GM12878 (cell line): ENCODE measurements at regions of chr5 and their contacts with region 1.

Region 1: GRCh38 chr5:14258840-14259239 is 115.7 kb downstream of the TRIO start:
- DNase-seq: no peak
- ATAC-seq: peak; percentile 65
- H3K4me3 ChIP-seq: peak overlapping the region; percentile 56; the same call in 1 of the 2 replicates
- H3K27ac ChIP-seq: peak overlapping the region; percentile 14
- H3K4me1 ChIP-seq: peaks cover 37% of the 10 kb centered on the region
- H3K27me3 ChIP-seq: no peaks in the 10 kb centered on the region
- CTCF ChIP-seq: peak in 2 of 3 experiments; percentile 24 to 33; a peak in 1 of 6 replicates
- EP300 ChIP-seq: no peak
- POLR2A ChIP-seq: no peak
- RAD21 ChIP-seq: no peak

Region 2: DNA sequence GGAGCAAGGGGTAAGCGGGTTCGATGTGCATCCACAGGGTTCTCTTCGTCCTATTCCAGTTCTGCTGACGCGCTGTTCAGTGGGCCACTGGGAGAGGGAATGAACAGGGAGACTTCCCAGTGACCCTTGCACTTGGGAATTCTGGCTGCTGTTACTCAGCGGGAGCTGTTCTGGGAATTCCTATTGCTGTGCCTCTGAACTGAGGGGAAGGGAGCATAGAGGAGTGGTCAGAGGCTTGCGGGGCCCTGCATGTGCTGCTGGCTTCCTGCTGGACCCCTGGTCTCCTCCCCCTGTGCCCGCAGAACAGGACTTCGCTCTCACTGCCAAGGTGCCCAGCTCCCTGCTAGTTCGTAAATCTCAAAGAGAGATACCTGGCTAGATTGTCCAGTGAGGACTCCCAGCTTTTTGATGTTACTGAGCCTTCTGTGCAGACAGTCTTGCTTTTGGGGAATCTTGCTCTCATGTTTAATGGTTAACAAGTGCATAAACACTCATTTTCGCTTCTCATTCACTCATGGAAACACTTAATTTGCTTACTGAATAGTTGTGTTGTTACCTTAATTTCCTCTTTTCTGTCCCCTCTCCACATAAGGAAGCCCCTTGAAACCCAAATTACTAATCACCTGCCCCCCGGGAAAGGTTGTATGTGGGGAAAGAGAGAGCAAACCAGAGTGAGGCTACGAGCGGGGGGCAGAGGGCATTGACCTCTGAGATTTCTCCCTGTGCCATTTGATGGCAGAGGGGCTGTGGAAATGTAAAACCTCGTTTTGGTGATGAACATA is 109.8 kb before region 1 on chr5:
- CTCF ChIA-PET with region 1: interaction called, 4 read pairs
- POLR2A ChIA-PET with region 1: interaction called, 8 read pairs
- RAD21 ChIA-PET with region 1: interaction called, 12 read pairs
- SMC1A ChIA-PET with region 1: interaction called, 10 read pairs
- in situ Hi-C with region 1: no loop called
- intact Hi-C with region 1: loop called (anchors 5 kb)
- DNase-seq: no peak
- ATAC-seq: peak; percentile 4
- H3K4me3 ChIP-seq: peak overlapping the region; percentile 52
- H3K27ac ChIP-seq: peak overlapping the region; percentile 66
- H3K4me1 ChIP-seq: peaks cover 57% of the 10 kb centered on the region
- H3K27me3 ChIP-seq: no peaks in the 10 kb centered on the region
- CTCF ChIP-seq: no peak
- EP300 ChIP-seq: peak in 1 of 2 experiments; percentile 28; a peak in 1 of 4 replicates
- POLR2A ChIP-seq: no peak
- RAD21 ChIP-seq: no peak

Region 3: GRCh38 chr5:14286574-14287421 is 28.0 kb after region 1 on chr5:
- CTCF ChIA-PET with region 1: interaction called, 5 read pairs
- POLR2A ChIA-PET with region 1: interaction called, 10 read pairs
- RAD21 ChIA-PET with region 1: interaction called, 16 read pairs
- SMC1A ChIA-PET with region 1: interaction called, 12 read pairs
- in situ Hi-C with region 1: no loop called
- intact Hi-C with region 1: no loop called
- DNase-seq: peak; percentile 86
- ATAC-seq: peak; percentile 95
- H3K4me3 ChIP-seq: no peak overlapping the region
- H3K27ac ChIP-seq: peak overlapping the region; percentile 53
- H3K4me1 ChIP-seq: peaks cover 17% of the 10 kb centered on the region
- H3K27me3 ChIP-seq: no peaks in the 10 kb centered on the region
- CTCF ChIP-seq: no peak
- EP300 ChIP-seq: peak; percentile 79 to 90
- POLR2A ChIP-seq: no peak
- RAD21 ChIP-seq: no peak

Region 4: GRCh38 chr5:14316471-14316870 is 57.6 kb after region 1 on chr5:
- CTCF ChIA-PET with region 1: no interaction called
- POLR2A ChIA-PET with region 1: no interaction called
- RAD21 ChIA-PET with region 1: no interaction called
- SMC1A ChIA-PET with region 1: no interaction called
- in situ Hi-C with region 1: no loop called
- intact Hi-C with region 1: no loop called
- DNase-seq: no peak
- ATAC-seq: no peak
- H3K4me3 ChIP-seq: no peak overlapping the region
- H3K27ac ChIP-seq: no peak overlapping the region
- H3K4me1 ChIP-seq: no peaks in the 10 kb centered on the region
- H3K27me3 ChIP-seq: no peaks in the 10 kb centered on the region
- CTCF ChIP-seq: no peak
- EP300 ChIP-seq: no peak
- POLR2A ChIP-seq: no peak
- RAD21 ChIP-seq: no peak